Ovary (tissue), 10 donors: ENCODE measurements at regions of chr6 and their contacts with region 1.

Region 1: GRCh38 chr6:78961513-78961912 is 94.2 kb downstream of the IRAK1BP1 start:
- DNase-seq: no peak
- H3K4me3 ChIP-seq: no peak overlapping the region
- H3K27ac ChIP-seq: no peak overlapping the region
- H3K4me1 ChIP-seq: no peaks in the 10 kb centered on the region
- H3K27me3 ChIP-seq: no peaks in the 10 kb centered on the region
- CTCF ChIP-seq: no peak
- EP300 ChIP-seq: no peak
- POLR2A ChIP-seq: no peak

Region 2: DNA sequence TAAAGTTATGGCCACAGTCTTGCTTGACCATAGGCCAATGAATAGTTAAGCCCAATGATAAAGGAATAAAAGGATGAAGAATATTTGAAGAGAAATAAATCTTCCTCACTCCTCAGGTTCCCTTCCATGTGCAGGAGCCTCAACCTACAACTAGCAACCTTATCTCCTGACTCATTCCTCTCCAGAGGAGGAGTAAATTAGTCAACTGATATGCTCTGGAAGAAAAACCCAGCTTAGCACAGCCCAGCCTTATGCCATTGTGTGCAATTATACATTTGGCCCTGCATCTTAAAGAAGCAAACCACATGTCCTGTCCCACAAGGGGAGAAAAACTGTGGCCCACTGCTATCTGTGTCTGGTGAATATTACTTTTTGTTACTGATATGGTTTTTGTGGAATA is 34.4 kb after region 1 on chr6:
- intact Hi-C with region 1: no loop called
- DNase-seq: no peak
- H3K4me3 ChIP-seq: no peak overlapping the region
- H3K27ac ChIP-seq: no peak overlapping the region
- H3K4me1 ChIP-seq: no peaks in the 10 kb centered on the region
- H3K27me3 ChIP-seq: no peaks in the 10 kb centered on the region
- CTCF ChIP-seq: no peak
- EP300 ChIP-seq: no peak
- POLR2A ChIP-seq: no peak

Region 3: DNA sequence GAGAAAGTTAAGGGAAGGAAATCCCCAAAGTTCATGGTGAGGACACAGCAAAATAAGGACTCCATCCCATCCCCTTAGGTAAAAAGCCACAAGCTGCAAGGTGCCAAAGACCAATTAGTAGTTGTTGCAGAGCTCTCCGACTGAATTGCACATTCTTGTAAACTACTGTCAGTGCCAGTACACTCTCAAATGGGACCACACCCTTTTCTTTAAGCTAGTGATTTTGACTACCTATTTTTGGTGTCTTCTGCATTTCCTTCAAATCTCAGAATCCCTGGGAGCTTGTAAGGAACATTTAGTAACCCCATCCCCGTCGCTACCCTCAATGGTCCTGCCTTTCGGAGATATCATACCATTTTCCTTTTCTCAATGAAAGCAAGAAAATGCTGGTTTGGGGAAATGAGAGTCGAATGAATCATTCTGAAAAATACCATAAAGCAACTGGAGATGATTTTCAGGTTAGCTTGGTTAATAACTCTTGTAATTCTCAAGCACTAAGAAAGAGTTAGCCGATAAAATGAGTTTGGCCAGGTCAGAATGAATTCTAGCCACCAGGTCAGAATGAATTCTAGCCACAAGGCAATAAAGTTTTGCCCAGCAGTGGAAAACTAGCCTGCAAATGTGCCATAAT is 278.1 kb after region 1 on chr6:
- intact Hi-C with region 1: loop called in 1 of 4 experiments (anchors 2 kb)
- DNase-seq: no peak
- H3K4me3 ChIP-seq: no peak overlapping the region
- H3K27ac ChIP-seq: no peak overlapping the region
- H3K4me1 ChIP-seq: peaks cover 1% of the 10 kb centered on the region
- H3K27me3 ChIP-seq: no peaks in the 10 kb centered on the region
- CTCF ChIP-seq: no peak
- EP300 ChIP-seq: no peak
- POLR2A ChIP-seq: no peak